ENCODE measurements at regions of chr2 and their contacts with region 1.

Region 1: GRCh38 chr2:47174733-47175361 is 19.7 kb upstream of the STPG4 start:
- DNase-seq: no peak
- H3K4me3 ChIP-seq: peak overlapping the region; percentile 78 to 95 (median 84)
- H3K27ac ChIP-seq: peak overlapping the region; percentile 97 to 100 (median 99)
- H3K4me1 ChIP-seq: peaks cover 47 to 50% (median 49%) of the 10 kb centered on the region in 4 donors
- H3K27me3 ChIP-seq: no peaks in the 10 kb centered on the region
- CTCF ChIP-seq: no peak
- EP300 ChIP-seq: no peak
- POLR2A ChIP-seq: no peak

Region 2: DNA sequence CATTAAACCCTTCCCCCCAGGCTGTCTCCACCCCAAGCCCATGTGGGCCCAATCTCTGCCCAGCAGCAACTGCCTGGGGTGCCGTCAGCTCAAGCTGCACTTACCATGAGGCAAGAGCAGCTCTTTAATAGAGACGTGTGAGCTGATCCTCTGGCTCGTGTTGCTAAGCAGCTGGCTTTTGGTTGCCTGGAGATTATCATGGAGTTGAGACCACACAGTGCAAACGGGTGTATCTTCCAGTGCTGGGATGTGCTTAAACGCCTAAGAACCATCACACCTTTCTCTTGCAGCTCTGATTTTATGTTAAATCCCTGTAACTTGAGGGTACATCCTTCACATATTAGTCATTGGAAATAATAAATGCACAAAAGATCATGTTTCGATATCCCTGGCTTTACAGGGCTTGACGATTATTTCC is 1252.3 kb before region 1 on chr2:
- intact Hi-C with region 1: no loop called
- DNase-seq: no peak
- H3K4me3 ChIP-seq: no peak overlapping the region
- H3K27ac ChIP-seq: no peak overlapping the region
- H3K4me1 ChIP-seq: peaks cover 33 to 45% (median 38%) of the 10 kb centered on the region in 4 donors
- H3K27me3 ChIP-seq: no peaks in the 10 kb centered on the region
- CTCF ChIP-seq: no peak
- EP300 ChIP-seq: no peak
- POLR2A ChIP-seq: no peak

Region 3: GRCh38 chr2:47016172-47016913 is 158.5 kb before region 1 on chr2:
- intact Hi-C with region 1: loop called (anchors 5 kb)
- DNase-seq: no peak
- H3K4me3 ChIP-seq: no peak overlapping the region
- H3K27ac ChIP-seq: peak overlapping the region; percentile 80 to 94 (median 92)
- H3K4me1 ChIP-seq: peaks cover 41 to 85% (median 79%) of the 10 kb centered on the region in 4 donors
- H3K27me3 ChIP-seq: no peaks in the 10 kb centered on the region
- CTCF ChIP-seq: peak in 2 of 3 experiments; percentile 37 to 38
- EP300 ChIP-seq: no peak
- POLR2A ChIP-seq: no peak

Region 4: DNA sequence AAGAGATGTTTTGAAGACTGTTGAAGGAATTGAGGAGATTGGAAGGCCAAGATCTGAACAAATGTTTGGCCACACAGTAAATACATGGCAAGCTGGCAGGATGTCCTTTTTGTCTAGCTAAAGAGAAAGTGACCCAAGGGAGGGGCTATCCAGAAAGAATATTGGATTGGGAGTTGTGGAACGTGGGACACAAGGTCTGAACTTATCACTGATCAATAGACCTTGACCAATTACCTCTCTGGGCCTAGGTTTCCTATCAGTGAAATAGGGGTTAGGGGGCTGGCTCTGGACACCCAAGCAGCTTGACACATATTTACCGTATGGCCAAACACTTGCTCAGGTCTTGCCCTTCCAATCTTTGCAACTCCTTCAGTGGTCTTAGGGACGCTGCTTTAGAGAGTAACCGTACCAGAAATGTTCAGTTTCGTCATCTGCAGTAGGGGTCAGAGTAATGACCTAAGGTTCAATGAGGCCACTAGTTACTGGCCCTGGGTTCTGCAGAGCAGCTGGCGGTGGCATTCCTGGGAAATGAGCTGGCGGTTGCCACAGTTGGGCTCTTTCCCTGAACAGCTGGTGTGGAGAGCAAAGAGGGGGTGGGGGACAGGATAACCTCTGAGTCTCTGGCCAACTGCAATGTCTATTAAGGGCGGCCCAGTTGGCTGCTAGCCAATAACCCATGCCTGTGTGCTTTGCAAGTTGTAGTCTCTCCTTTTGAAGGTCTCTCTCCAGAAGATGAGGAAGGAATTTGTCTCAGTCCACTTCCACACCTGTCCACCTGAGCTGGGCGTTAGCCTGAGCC is 50.4 kb after region 1 on chr2:
- intact Hi-C with region 1: no loop called
- DNase-seq: no peak
- H3K4me3 ChIP-seq: no peak overlapping the region
- H3K27ac ChIP-seq: peak overlapping the region in 1 of 4 donors; percentile 3
- H3K4me1 ChIP-seq: peaks cover 20 to 36% (median 27%) of the 10 kb centered on the region in 4 donors
- H3K27me3 ChIP-seq: no peaks in the 10 kb centered on the region
- CTCF ChIP-seq: no peak
- EP300 ChIP-seq: no peak
- POLR2A ChIP-seq: no peak

Region 5: DNA sequence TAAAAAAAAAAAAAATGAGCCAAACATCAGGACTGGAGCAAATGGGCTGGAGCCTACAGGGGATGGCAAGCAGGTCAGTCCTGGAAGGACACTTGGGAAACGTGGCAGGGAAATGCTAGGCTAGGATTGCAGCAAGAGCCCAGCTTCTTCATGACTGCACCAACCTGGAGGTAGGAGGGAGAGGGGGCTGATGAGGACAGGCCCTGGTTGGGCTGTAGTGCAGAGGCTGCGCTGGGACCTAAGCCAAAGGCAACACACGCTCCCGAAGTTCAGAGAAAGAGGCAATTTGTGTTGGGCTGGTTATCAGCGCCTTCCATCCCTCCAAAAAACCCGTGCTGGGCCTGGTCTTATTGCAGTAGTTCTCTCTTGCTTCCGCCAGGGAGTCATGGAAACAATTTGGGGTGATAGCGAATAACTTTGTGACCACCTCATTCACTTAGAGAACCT is 62.6 kb after region 1 on chr2:
- intact Hi-C with region 1: no loop called
- DNase-seq: no peak
- H3K4me3 ChIP-seq: no peak overlapping the region
- H3K27ac ChIP-seq: peak overlapping the region; percentile 19 to 55 (median 30)
- H3K4me1 ChIP-seq: peaks cover 4 to 36% (median 25%) of the 10 kb centered on the region in 4 donors
- H3K27me3 ChIP-seq: no peaks in the 10 kb centered on the region
- CTCF ChIP-seq: no peak
- EP300 ChIP-seq: no peak
- POLR2A ChIP-seq: no peak